ENCODE measurements at regions of chr2 and their contacts with region 1.

Region 1: GRCh38 chr2:172162739-172163336 is 60.1 kb upstream of the DLX2 start:
- DNase-seq: no peak
- ATAC-seq: no peak; the same call in 1 of the 2 replicates
- H3K4me3 ChIP-seq: no peak overlapping the region
- H3K27ac ChIP-seq: no peak overlapping the region
- H3K4me1 ChIP-seq: no peaks in the 10 kb centered on the region
- H3K27me3 ChIP-seq: peaks cover 1% of the 10 kb centered on the region; the same call in 1 of the 2 replicates
- CTCF ChIP-seq: no peak

Region 2: GRCh38 chr2:172021955-172022354 is 140.9 kb before region 1 on chr2:
- CTCF ChIA-PET with region 1: no interaction called
- POLR2A ChIA-PET with region 1: no interaction called
- in situ Hi-C with region 1: no loop called
- intact Hi-C with region 1: no loop called
- DNase-seq: no peak
- ATAC-seq: peak; percentile 62
- H3K4me3 ChIP-seq: no peak overlapping the region
- H3K27ac ChIP-seq: peak overlapping the region; percentile 37
- H3K4me1 ChIP-seq: peaks cover 17% of the 10 kb centered on the region
- H3K27me3 ChIP-seq: no peaks in the 10 kb centered on the region
- CTCF ChIP-seq: no peak

Region 3: DNA sequence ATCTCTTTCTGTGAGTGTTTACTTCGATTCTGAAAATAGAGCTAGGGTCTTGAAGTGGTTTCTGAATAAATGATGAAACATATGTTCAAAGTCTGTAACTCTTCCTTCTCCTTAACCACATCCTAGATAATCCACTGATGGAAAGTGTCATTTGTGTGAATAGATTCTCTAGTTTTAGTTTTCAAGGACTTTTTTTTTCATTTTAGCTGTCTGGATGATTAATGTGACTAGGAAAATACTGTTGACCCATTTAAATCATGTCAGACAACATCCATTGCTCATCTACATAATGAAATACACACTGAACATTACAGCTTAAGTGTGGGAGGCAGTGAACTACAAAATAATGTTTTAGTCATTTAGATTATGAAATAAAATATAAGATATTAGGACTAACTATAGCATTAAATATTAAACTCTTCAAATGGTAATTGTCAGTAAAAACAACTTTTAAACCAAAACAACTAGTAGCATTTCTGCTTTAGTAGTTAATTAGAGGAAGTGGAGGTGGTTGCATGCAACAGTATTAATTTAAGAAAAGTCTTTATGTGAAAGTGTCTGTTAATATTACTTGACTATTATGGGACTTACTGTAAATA is 116.7 kb before region 1 on chr2:
- CTCF ChIA-PET with region 1: interaction called, 21 read pairs
- POLR2A ChIA-PET with region 1: no interaction called
- in situ Hi-C with region 1: no loop called
- intact Hi-C with region 1: no loop called
- DNase-seq: no peak
- ATAC-seq: no peak
- H3K4me3 ChIP-seq: no peak overlapping the region
- H3K27ac ChIP-seq: no peak overlapping the region
- H3K4me1 ChIP-seq: peaks cover 3% of the 10 kb centered on the region; the same call in 1 of the 2 replicates
- H3K27me3 ChIP-seq: no peaks in the 10 kb centered on the region
- CTCF ChIP-seq: no peak

Region 4: GRCh38 chr2:172147944-172148650 is 14.7 kb before region 1 on chr2:
- CTCF ChIA-PET with region 1: no interaction called
- POLR2A ChIA-PET with region 1: interaction called, 17 read pairs
- in situ Hi-C with region 1: no loop called
- intact Hi-C with region 1: no loop called
- DNase-seq: no peak
- ATAC-seq: peak; percentile 53; the same call in 1 of the 2 replicates
- H3K4me3 ChIP-seq: no peak overlapping the region
- H3K27ac ChIP-seq: no peak overlapping the region
- H3K4me1 ChIP-seq: no peaks in the 10 kb centered on the region
- H3K27me3 ChIP-seq: no peaks in the 10 kb centered on the region; the same call in 1 of the 2 replicates
- CTCF ChIP-seq: no peak

Measured in Panc1 (cell line).